ENCODE measurements at regions of chr15 and their contacts with region 1.

Region 1: DNA sequence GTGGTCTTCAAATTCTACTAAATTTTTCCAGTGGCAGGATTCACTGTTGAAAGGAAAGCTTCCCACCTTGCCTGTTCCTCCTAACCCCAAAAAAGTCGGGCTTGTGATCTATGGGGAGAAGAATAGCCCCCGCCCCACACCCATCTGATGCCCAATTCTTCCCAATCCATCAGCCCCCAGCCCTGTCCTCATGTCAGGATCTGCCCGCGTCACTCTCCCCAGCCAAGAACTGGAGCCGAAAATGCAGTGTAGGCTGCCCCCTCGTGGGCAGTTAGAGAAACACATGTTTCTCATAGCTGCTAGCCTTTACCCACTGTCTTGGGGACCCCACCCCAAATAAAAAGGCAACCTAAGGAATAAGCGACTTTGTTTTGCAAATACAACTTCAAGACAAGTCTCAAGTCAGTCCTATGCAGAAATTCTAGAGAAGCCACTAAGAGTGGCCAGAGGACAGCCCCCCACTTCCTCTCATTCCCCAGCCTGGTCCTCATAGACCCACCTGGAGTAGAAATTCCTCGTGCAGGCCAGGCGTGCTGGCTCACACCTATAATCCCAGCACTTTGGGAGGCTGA is 13.0 kb upstream of the CSK start:
- DNase-seq: peak; percentile 60 to 67 (median 60)
- H3K4me3 ChIP-seq: no peak overlapping the region
- H3K4me3 Mint-ChIP-seq: peak overlapping the region in 2 of 8 donors; percentile 0 to 30
- H3K27ac ChIP-seq: no peak overlapping the region
- H3K27ac Mint-ChIP-seq: peak overlapping the region in 4 of 7 donors; percentile 7 to 81 (median 19)
- H3K4me1 ChIP-seq: peaks cover 22% of the 10 kb centered on the region
- H3K4me1 Mint-ChIP-seq: peaks cover 8 to 36% (median 16%) of the 10 kb centered on the region in 4 donors
- H3K27me3 ChIP-seq: no peaks in the 10 kb centered on the region
- H3K27me3 Mint-ChIP-seq: peaks cover 3 to 4% of the 10 kb centered on the region in 2 donors

Region 2: DNA sequence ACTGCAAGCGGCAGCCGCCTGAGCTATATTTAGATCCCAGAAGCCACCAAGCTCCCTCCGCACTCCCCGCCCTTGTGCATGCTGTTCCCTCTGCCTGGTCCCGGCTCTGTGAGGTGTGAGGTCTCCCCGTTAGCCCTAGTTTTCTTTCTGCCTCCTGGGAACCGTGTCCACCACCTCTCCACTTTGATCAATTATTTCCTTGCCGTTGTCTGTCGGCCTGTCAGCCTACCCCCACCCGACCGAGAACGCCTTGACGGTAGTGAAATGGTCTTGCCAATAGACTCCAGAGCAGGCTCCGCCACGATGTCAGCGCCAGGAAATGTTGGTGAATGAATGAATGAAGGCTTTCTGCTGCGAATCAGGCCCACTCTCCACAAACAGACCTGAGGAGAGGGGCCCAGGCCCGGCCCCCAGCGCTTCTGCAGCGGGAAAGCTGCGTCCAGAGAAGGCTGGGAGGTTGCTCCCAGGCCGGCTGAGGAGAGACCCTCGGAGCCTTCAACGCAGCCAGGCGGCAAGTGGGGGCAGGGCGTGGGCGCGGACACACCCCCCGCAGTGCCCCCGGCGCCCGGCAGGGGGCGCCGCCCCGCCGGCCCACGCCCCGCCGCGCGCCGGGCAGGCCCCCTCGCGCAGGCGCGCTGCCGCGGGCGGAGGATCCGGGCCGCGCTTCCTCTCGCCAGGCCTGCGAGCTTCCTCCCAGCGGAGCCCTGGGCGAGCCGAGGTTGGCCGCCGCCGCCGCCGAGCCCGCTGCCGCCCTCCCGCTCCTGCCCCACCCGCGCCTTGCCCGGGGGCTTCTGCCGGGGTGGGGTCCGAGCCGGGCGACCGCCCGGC is 12.8 kb after region 1 on chr15 and contains the start of gene CSK:
- CTCF ChIA-PET with region 1: interaction called, 1,908 read pairs
- POLR2A ChIA-PET with region 1: interaction called, 1,342 read pairs
- intact Hi-C with region 1: loop called (anchors 1 kb)
- DNase-seq: peak; percentile 74 to 87 (median 84)
- H3K4me3 ChIP-seq: peak within 1 kb of the TSS; percentile 93 to 97
- H3K4me3 Mint-ChIP-seq: peak within 1 kb of the TSS; percentile 90 to 97 (median 96)
- H3K27ac ChIP-seq: peak within 1 kb of the TSS; percentile 86
- H3K27ac Mint-ChIP-seq: peak within 1 kb of the TSS; percentile 95 to 98 (median 98)
- H3K4me1 ChIP-seq: peaks cover 80% of the 10 kb centered on the region
- H3K4me1 Mint-ChIP-seq: peaks cover 48 to 90% (median 62%) of the 10 kb centered on the region in 4 donors
- H3K27me3 ChIP-seq: no peaks in the 10 kb centered on the region
- H3K27me3 Mint-ChIP-seq: no peaks in the 10 kb centered on the region
- total RNA-seq, gene CSK: 234 to 247 TPM

Region 3: GRCh38 chr15:74799856-74800547 is 31.1 kb after region 1 on chr15:
- CTCF ChIA-PET with region 1: interaction called, 1,908 read pairs
- POLR2A ChIA-PET with region 1: interaction called, 1,342 read pairs
- intact Hi-C with region 1: loop called (anchors 1 kb)
- DNase-seq: peak; percentile 84 to 89 (median 86)
- H3K4me3 ChIP-seq: no peak overlapping the region
- H3K4me3 Mint-ChIP-seq: peak overlapping the region in 4 of 8 donors; percentile 17 to 65 (median 46)
- H3K27ac ChIP-seq: peak overlapping the region; percentile 84
- H3K27ac Mint-ChIP-seq: peak overlapping the region; percentile 83 to 97 (median 94)
- H3K4me1 ChIP-seq: peaks cover 55% of the 10 kb centered on the region
- H3K4me1 Mint-ChIP-seq: peaks cover 28 to 59% (median 45%) of the 10 kb centered on the region in 4 donors
- H3K27me3 ChIP-seq: no peaks in the 10 kb centered on the region
- H3K27me3 Mint-ChIP-seq: no peaks in the 10 kb centered on the region

Region 4: GRCh38 chr15:74842581-74843444 is 74.0 kb after region 1 on chr15 and contains the start of gene ULK3:
- CTCF ChIA-PET with region 1: interaction called, 70 read pairs
- POLR2A ChIA-PET with region 1: no interaction called
- intact Hi-C with region 1: loop called (anchors 2 kb)
- DNase-seq: peak; percentile 92 to 94 (median 93)
- H3K4me3 ChIP-seq: peak within 1 kb of the TSS; percentile 81 to 83
- H3K4me3 Mint-ChIP-seq: peak within 1 kb of the TSS; percentile 87 to 92 (median 91)
- H3K27ac ChIP-seq: peak within 1 kb of the TSS; percentile 77
- H3K27ac Mint-ChIP-seq: peak within 1 kb of the TSS; percentile 91 to 97 (median 93)
- H3K4me1 ChIP-seq: peaks cover 52% of the 10 kb centered on the region
- H3K4me1 Mint-ChIP-seq: peaks cover 37 to 57% (median 46%) of the 10 kb centered on the region in 4 donors
- H3K27me3 ChIP-seq: no peaks in the 10 kb centered on the region
- H3K27me3 Mint-ChIP-seq: no peaks in the 10 kb centered on the region
- total RNA-seq, gene ULK3: 84.9 to 88.3 TPM

Region 5: GRCh38 chr15:74956648-74957300 is 187.9 kb after region 1 on chr15 and contains the start of gene RPP25:
- CTCF ChIA-PET with region 1: interaction called, 97 read pairs
- POLR2A ChIA-PET with region 1: no interaction called
- intact Hi-C with region 1: no loop called
- DNase-seq: peak; percentile 43 to 56 (median 52)
- H3K4me3 ChIP-seq: peak within 1 kb of the TSS; percentile 12 to 68
- H3K4me3 Mint-ChIP-seq: peak within 1 kb of the TSS; percentile 75 to 82 (median 80)
- H3K27ac ChIP-seq: no peak within 1 kb of the TSS
- H3K27ac Mint-ChIP-seq: no peak within 1 kb of the TSS
- H3K4me1 ChIP-seq: peaks cover 40% of the 10 kb centered on the region
- H3K4me1 Mint-ChIP-seq: peaks cover 6 to 35% (median 19%) of the 10 kb centered on the region in 4 donors
- H3K27me3 ChIP-seq: peaks cover 19% of the 10 kb centered on the region
- H3K27me3 Mint-ChIP-seq: peaks cover 19 to 20% of the 10 kb centered on the region in 2 donors
- total RNA-seq, gene RPP25: 2.6 to 2.8 TPM

Region 6: GRCh38 chr15:74967670-74968069 is 198.8 kb after region 1 on chr15:
- CTCF ChIA-PET with region 1: no interaction called
- POLR2A ChIA-PET with region 1: no interaction called
- intact Hi-C with region 1: no loop called
- DNase-seq: no peak
- H3K4me3 ChIP-seq: no peak overlapping the region
- H3K4me3 Mint-ChIP-seq: no peak overlapping the region
- H3K27ac ChIP-seq: no peak overlapping the region
- H3K27ac Mint-ChIP-seq: no peak overlapping the region
- H3K4me1 ChIP-seq: no peaks in the 10 kb centered on the region
- H3K4me1 Mint-ChIP-seq: no peaks in the 10 kb centered on the region
- H3K27me3 ChIP-seq: peaks cover 1% of the 10 kb centered on the region
- H3K27me3 Mint-ChIP-seq: peaks cover 0 to under 1% of the 10 kb centered on the region in 2 donors

Region 7: DNA sequence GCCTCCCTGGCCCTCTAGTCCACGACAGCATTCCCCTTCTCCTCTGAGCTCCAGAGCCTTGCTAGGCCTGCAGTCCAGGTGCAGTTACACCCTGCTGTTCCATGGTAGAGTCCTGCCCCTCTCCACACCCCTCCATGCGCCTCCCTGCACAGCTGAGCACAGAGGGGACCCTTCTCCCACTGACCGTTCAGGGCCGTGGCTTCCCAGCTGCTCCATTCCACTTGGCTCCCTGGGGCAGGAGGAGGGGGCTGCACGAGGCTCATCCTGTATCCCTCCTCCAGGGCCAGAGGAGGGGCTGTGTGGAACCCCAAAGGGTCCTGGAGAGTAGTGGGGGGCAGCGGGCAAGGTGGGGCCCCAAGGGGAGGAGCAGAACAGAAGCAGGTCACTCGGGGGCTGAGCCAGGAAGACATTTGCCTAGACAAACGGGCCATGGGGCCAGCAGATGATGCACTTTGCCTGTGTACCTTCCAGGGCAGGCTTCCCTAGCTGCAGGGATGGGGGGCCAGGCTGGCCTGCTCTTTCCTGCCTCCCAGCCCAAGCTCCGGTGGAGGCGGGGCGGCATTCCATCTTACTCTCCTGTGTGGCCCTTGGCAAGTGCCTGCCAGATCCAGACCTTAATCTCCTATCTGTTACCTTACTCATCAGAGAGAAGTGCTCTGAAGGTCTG is 468.6 kb after region 1 on chr15:
- CTCF ChIA-PET with region 1: no interaction called
- POLR2A ChIA-PET with region 1: no interaction called
- intact Hi-C with region 1: no loop called
- DNase-seq: no peak
- H3K4me3 ChIP-seq: no peak overlapping the region
- H3K4me3 Mint-ChIP-seq: no peak overlapping the region
- H3K27ac ChIP-seq: no peak overlapping the region
- H3K27ac Mint-ChIP-seq: no peak overlapping the region
- H3K4me1 ChIP-seq: no peaks in the 10 kb centered on the region
- H3K4me1 Mint-ChIP-seq: no peaks in the 10 kb centered on the region
- H3K27me3 ChIP-seq: no peaks in the 10 kb centered on the region
- H3K27me3 Mint-ChIP-seq: peaks cover 1 to 14% of the 10 kb centered on the region in 2 donors

Measured in CD4-positive, alpha-beta memory T cell (primary cell).